Naive thymus-derived CD4-positive, alpha-beta T cell (primary cell): ENCODE measurements at regions of chr9 and their contacts with region 1.

Region 1: DNA sequence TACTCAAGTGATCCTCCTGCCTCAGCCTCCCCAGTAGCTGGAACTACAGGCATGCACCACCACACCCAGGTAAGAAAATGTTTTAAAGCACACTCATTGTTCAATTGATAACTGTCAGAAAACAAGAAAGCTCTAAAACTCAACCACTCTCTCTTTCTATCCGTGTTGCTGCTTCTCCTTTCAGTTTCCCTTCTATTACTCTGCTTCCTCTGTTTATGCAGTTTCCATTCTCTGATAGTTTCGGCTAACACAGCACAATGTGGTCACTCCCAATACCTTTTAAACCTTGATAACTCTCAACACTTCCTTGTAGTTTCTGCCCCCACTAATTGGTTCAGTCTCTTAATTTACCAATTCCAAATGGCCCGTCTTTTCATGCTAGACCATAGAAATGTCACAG is 59.2 kb upstream of the NR4A3 start:
- DNase-seq: no peak
- ATAC-seq: peak; percentile 57
- H3K4me3 ChIP-seq: no peak overlapping the region
- H3K4me3 Mint-ChIP-seq: no peak overlapping the region
- H3K27ac ChIP-seq: no peak overlapping the region
- H3K27ac Mint-ChIP-seq: no peak overlapping the region
- H3K4me1 ChIP-seq: no peaks in the 10 kb centered on the region
- H3K4me1 Mint-ChIP-seq: no peaks in the 10 kb centered on the region
- H3K27me3 ChIP-seq: no peaks in the 10 kb centered on the region
- H3K27me3 Mint-ChIP-seq: peaks cover 0 to 10% (median 8%) of the 10 kb centered on the region in 5 donors

Region 2: GRCh38 chr9:99713838-99714306 is 48.6 kb before region 1 on chr9:
- CTCF ChIA-PET with region 1: no interaction called
- POLR2A ChIA-PET with region 1: no interaction called
- intact Hi-C with region 1: loop called in 1 of 2 experiments (anchors 10 kb)
- DNase-seq: no peak
- ATAC-seq: no peak
- H3K4me3 ChIP-seq: no peak overlapping the region
- H3K4me3 Mint-ChIP-seq: no peak overlapping the region
- H3K27ac ChIP-seq: no peak overlapping the region
- H3K27ac Mint-ChIP-seq: no peak overlapping the region
- H3K4me1 ChIP-seq: no peaks in the 10 kb centered on the region
- H3K4me1 Mint-ChIP-seq: peaks cover 0 to 7% (median 0%) of the 10 kb centered on the region in 7 donors
- H3K27me3 ChIP-seq: no peaks in the 10 kb centered on the region
- H3K27me3 Mint-ChIP-seq: peaks cover 0 to 5% (median 3%) of the 10 kb centered on the region in 5 donors

Region 3: GRCh38 chr9:99720455-99721050 is 41.9 kb before region 1 on chr9:
- CTCF ChIA-PET with region 1: no interaction called
- POLR2A ChIA-PET with region 1: no interaction called
- intact Hi-C with region 1: loop called in 1 of 2 experiments (anchors 1 kb)
- DNase-seq: peak in 6 of 9 donors; percentile 19 to 48 (median 36)
- ATAC-seq: peak; percentile 73
- H3K4me3 ChIP-seq: peak overlapping the region; percentile 51
- H3K4me3 Mint-ChIP-seq: peak overlapping the region; percentile 74 to 95 (median 86)
- H3K27ac ChIP-seq: peak overlapping the region; percentile 64
- H3K27ac Mint-ChIP-seq: peak overlapping the region; percentile 86 to 97 (median 94)
- H3K4me1 ChIP-seq: peaks cover 4 to 29% of the 10 kb centered on the region in 2 donors
- H3K4me1 Mint-ChIP-seq: peaks cover 17 to 42% (median 32%) of the 10 kb centered on the region in 7 donors
- H3K27me3 ChIP-seq: no peaks in the 10 kb centered on the region
- H3K27me3 Mint-ChIP-seq: peaks cover 0 to 2% (median 0%) of the 10 kb centered on the region in 5 donors

Region 4: GRCh38 chr9:100020121-100020795 is 257.8 kb after region 1 on chr9:
- CTCF ChIA-PET with region 1: no interaction called
- POLR2A ChIA-PET with region 1: no interaction called
- intact Hi-C with region 1: no loop called
- DNase-seq: no peak
- ATAC-seq: no peak
- H3K4me3 ChIP-seq: no peak overlapping the region
- H3K4me3 Mint-ChIP-seq: no peak overlapping the region
- H3K27ac ChIP-seq: no peak overlapping the region
- H3K27ac Mint-ChIP-seq: no peak overlapping the region
- H3K4me1 ChIP-seq: no peaks in the 10 kb centered on the region
- H3K4me1 Mint-ChIP-seq: peaks cover 0 to 9% (median 0%) of the 10 kb centered on the region in 7 donors
- H3K27me3 ChIP-seq: no peaks in the 10 kb centered on the region
- H3K27me3 Mint-ChIP-seq: no peaks in the 10 kb centered on the region